ENCODE measurements at regions of chr1 and their contacts with region 1.

Region 1: GRCh38 chr1:161045750-161046571 is at the start of gene USF1:
- DNase-seq: peak; percentile 91
- ATAC-seq: peak; percentile 62
- H3K4me3 Mint-ChIP-seq: peak within 1 kb of the TSS; percentile 95
- H3K27ac Mint-ChIP-seq: peak within 1 kb of the TSS; percentile 100
- H3K4me1 Mint-ChIP-seq: peaks cover 66% of the 10 kb centered on the region
- H3K27me3 Mint-ChIP-seq: no peaks in the 10 kb centered on the region
- CTCF ChIP-seq: no peak
- total RNA-seq, gene USF1: 134 and 143 TPM in 2 replicates

Region 2: DNA sequence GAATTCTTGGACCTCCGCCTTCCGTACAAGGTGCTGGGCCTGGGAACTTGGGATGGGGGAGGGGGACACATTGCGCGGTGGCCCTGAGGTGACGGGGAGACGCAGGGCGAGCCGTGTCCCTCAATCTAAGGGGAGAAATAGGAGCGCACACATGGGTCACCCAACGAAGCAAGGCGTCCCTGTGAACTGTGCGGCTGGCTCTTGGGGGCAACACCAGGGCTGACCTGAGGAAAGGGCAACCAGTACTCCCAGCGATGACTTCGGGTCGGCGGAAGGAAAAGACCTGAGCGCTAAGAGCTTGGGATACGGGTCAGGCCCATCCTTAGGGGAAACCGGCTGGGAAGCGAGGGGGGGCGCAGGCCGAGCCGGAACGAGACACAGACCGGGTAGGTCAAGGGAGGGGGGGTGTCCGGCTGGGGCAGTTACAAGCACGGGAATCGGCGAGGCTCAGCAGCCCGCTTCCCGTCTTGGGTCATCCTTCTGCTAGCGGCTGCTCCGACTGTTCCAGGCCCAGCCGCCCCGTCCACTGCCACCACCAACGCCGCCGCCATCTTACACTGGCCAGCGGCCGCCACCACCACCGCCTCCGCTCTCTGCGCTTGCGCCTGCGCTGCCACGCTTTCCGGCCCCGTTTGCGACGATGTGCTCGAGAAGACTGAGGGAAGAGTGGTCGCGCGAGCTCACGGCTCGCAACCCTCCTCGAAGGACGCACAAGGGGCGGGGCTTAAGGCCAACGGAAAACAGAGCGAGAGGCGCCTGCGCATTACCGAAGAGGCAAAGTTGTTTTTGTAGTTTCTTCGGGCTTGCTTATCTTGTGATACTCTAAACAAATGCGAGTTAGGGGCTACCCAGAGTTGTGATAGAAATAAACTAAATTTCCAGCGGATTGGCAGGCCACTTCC is 783.8 kb before region 1 on chr1 and contains the start of gene DCAF8:
- CTCF ChIA-PET with region 1: no interaction called
- POLR2A ChIA-PET with region 1: no interaction called
- intact Hi-C with region 1: loop called (anchors 1 kb)
- DNase-seq: peak; percentile 95
- ATAC-seq: peak; percentile 91
- H3K4me3 Mint-ChIP-seq: peak within 1 kb of the TSS; percentile 99
- H3K27ac Mint-ChIP-seq: peak within 1 kb of the TSS; percentile 98
- H3K4me1 Mint-ChIP-seq: peaks cover 47% of the 10 kb centered on the region
- H3K27me3 Mint-ChIP-seq: no peaks in the 10 kb centered on the region
- CTCF ChIP-seq: no peak
- total RNA-seq, gene DCAF8: 155 and 172 TPM in 2 replicates

Region 3: GRCh38 chr1:161013488-161014230 is 32.3 kb before region 1 on chr1:
- CTCF ChIA-PET with region 1: no interaction called
- POLR2A ChIA-PET with region 1: interaction called, 54 read pairs
- intact Hi-C with region 1: loop called (anchors 1 kb)
- DNase-seq: peak; percentile 55
- ATAC-seq: peak; percentile 84
- H3K4me3 Mint-ChIP-seq: peak overlapping the region; percentile 87
- H3K27ac Mint-ChIP-seq: peak overlapping the region; percentile 98
- H3K4me1 Mint-ChIP-seq: peaks cover 23% of the 10 kb centered on the region
- H3K27me3 Mint-ChIP-seq: no peaks in the 10 kb centered on the region
- CTCF ChIP-seq: no peak

Region 4: GRCh38 chr1:161098210-161099068 is 52.5 kb after region 1 on chr1 and contains the start of gene KLHDC9:
- CTCF ChIA-PET with region 1: interaction called, 31 read pairs
- POLR2A ChIA-PET with region 1: interaction called, 79 read pairs
- intact Hi-C with region 1: loop called (anchors 1 kb)
- DNase-seq: peak; percentile 77
- ATAC-seq: peak; percentile 79
- H3K4me3 Mint-ChIP-seq: peak within 1 kb of the TSS; percentile 88
- H3K27ac Mint-ChIP-seq: peak within 1 kb of the TSS; percentile 93
- H3K4me1 Mint-ChIP-seq: peaks cover 36% of the 10 kb centered on the region
- H3K27me3 Mint-ChIP-seq: no peaks in the 10 kb centered on the region
- CTCF ChIP-seq: peak; percentile 11
- total RNA-seq, gene KLHDC9: 2.9 and 3.6 TPM in 2 replicates

Region 5: GRCh38 chr1:161132410-161133219 is 86.7 kb after region 1 on chr1 and contains the start of gene DEDD:
- CTCF ChIA-PET with region 1: no interaction called
- POLR2A ChIA-PET with region 1: interaction called, 41 read pairs
- intact Hi-C with region 1: loop called (anchors 1 kb)
- DNase-seq: peak; percentile 88
- ATAC-seq: peak; percentile 92
- H3K4me3 Mint-ChIP-seq: no peak within 1 kb of the TSS
- H3K27ac Mint-ChIP-seq: no peak within 1 kb of the TSS
- H3K4me1 Mint-ChIP-seq: peaks cover 33% of the 10 kb centered on the region
- H3K27me3 Mint-ChIP-seq: no peaks in the 10 kb centered on the region
- CTCF ChIP-seq: no peak
- total RNA-seq, gene DEDD: 39.5 and 40.5 TPM in 2 replicates

Region 6: DNA sequence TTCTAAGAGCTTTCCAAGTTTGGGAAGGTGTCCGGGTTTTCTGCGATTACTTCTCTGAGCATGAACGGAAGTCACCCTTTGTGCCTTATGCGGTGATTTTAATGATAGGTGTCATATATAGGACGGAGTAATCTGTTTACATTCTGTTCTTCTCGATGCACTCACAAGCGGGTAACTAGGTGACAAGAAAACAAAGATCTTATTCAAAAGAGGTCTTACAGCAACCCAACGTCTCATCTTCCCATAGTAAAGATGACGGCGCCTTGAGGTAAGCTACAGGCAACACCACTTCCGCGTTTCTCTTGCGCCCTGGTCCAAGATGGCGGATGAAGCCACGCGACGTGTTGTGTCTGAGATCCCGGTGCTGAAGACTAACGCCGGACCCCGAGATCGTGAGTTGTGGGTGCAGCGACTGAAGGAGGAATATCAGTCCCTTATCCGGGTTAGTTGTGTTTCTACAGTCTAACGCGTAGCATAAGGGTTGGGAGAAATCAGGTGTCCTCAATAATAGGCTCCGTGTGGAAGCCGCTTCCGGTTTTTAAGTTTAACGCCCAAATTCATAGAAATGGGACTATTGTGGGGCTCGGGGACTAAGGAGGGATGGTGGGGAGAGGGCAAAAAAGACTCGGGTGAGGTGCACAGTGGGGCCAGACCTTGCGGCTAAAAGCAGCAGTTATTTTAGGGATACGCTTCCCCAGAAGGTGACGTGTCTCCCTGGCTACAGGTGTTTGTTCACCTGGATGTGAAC is 107.9 kb after region 1 on chr1 and contains the start of gene UFC1:
- CTCF ChIA-PET with region 1: no interaction called
- POLR2A ChIA-PET with region 1: interaction called, 26 read pairs
- intact Hi-C with region 1: loop called (anchors 1 kb)
- DNase-seq: peak; percentile 66
- ATAC-seq: peak; percentile 94
- H3K4me3 Mint-ChIP-seq: peak within 1 kb of the TSS; percentile 99
- H3K27ac Mint-ChIP-seq: peak within 1 kb of the TSS; percentile 100
- H3K4me1 Mint-ChIP-seq: peaks cover 21% of the 10 kb centered on the region
- H3K27me3 Mint-ChIP-seq: no peaks in the 10 kb centered on the region
- CTCF ChIP-seq: no peak
- total RNA-seq, gene UFC1: 107 and 127 TPM in 2 replicates

Region 7: DNA sequence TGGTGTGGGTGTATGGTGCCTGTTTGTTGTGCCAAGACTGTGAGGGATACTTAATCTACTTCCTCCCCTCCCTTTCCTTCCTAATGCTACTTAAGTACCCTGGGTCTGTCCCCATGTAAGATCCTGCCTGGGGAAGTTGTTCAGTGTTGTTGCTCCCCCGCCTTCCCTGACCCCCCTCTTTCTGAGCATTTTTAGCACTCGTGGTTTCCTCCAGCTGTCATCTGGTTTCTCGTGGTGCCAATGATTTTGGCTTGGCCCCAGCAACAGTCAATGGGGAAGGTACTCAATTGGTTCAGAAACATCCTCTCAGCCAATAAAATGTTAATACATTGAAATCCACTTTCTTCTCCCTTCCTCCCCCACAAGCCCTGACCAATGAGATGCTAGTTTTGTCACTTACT is 139.3 kb after region 1 on chr1:
- CTCF ChIA-PET with region 1: no interaction called
- POLR2A ChIA-PET with region 1: interaction called, 10 read pairs
- intact Hi-C with region 1: no loop called
- DNase-seq: peak; percentile 41
- ATAC-seq: peak; percentile 66
- H3K4me3 Mint-ChIP-seq: peak overlapping the region; percentile 77
- H3K27ac Mint-ChIP-seq: peak overlapping the region; percentile 93
- H3K4me1 Mint-ChIP-seq: peaks cover 85% of the 10 kb centered on the region
- H3K27me3 Mint-ChIP-seq: no peaks in the 10 kb centered on the region
- CTCF ChIP-seq: no peak